RWPE1 (cell line): ENCODE measurements at regions of chr6 and their contacts with region 1.

Region 1: DNA sequence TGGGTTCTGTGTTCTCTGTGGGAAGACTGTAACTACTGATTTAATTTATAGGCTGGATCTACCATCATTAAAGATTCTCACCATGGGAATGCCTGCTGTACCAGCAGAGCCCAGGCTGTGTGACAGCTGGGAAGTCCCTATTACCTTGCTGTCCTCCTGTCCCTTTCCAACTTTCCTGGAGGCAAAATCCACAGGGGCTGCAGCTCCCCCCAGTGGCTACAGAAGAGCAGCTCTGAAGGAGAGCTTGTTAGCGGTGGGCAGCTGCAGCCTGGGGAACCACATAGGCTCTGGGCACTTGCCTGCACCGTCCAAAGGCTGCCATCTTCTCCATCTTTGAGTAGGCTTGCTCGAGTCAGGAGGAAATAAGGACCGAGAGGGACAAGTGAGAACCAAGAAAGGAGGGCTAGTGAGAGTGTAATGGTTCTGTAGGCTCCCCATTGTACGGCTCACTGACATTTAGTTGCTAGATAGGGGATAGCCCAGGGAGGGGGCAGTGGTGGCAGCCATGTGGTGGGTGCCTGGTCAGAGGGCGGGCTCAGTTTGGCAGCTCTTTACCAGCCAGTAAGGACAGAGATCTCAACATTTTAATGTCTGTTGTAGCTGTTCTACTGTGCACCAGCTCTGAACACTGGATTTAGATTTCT is 155.1 kb upstream of the MLIP start:
- DNase-seq: peak; percentile 70
- H3K27ac ChIP-seq: no peak overlapping the region
- CTCF ChIP-seq: peak; percentile 77

Region 2: DNA sequence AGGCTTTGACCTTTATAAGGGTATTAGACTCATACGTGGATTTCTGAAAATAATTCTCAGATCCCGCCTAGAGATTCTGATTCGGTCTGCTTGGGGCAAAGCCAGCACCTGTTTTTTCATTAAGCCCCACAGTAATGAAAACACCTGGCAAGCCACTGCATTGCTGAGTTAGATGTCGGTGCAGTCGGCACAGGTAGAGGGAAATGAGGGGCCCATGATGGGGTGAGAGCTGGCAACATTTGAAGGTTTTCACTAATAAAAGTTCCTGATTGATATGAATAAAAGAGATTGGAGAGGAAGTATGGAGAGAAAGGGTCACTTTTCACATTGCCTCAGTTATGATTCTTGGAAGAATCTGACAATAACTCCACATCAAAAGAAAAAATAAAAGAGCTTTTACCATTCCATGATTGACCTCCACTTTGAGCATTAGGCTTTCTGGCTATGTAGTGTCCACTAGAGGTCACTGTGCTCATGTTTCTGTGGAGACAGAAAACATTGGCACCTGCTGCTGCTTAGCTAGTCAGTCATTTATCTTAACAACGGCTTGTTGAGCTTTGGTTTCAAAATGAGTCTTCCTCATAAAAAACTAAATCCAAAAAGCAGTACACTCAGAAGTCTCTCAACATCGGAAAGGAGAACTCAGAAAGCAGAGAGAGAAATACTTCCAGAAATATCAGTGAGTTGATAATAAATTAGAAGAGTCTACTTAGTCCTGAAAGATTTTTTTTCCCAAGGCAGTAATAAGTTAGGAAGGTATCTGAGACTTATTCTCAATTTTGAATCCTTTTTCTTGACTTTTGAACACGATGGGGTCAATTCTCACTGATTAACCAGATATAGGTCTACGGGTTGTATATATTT is 237.4 kb before region 1 on chr6:
- CTCF ChIA-PET with region 1: interaction called, 98 read pairs
- POLR2A ChIA-PET with region 1: no interaction called
- DNase-seq: peak; percentile 59
- H3K27ac ChIP-seq: no peak overlapping the region
- CTCF ChIP-seq: peak; percentile 83

Region 3: DNA sequence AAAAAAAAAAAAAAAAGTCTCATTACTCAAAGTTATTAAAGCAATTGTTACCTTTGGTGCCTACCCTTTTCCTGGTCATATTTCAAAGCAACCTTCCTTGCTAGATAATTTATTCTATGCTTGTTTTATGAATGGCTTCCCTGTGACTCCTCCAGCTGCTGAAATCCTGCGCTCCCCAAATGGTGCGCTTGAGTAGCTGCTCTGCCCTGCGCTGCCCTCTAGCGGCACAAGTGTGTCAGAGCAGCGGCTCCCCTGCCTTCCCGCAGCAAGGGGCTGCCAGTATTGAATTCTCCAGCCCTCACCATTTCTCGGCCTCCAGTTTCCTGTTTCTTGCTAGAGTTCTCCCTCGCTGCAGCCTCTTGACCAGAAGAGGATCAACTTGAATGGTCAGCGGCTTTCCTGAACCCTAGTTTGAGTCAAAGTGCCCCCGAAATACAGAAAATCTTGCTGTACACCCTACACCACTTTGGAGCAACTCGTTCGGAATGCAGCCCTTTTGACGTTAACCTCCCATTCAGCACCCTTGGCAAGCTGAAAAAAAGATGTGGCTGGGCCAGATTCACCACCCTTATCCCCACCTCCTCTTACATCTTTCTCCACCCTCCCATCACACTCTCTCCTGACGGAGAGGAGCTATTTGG is 230.3 kb before region 1 on chr6:
- CTCF ChIA-PET with region 1: interaction called, 98 read pairs
- POLR2A ChIA-PET with region 1: no interaction called
- DNase-seq: peak; percentile 71
- H3K27ac ChIP-seq: no peak overlapping the region
- CTCF ChIP-seq: peak; percentile 94

Region 4: DNA sequence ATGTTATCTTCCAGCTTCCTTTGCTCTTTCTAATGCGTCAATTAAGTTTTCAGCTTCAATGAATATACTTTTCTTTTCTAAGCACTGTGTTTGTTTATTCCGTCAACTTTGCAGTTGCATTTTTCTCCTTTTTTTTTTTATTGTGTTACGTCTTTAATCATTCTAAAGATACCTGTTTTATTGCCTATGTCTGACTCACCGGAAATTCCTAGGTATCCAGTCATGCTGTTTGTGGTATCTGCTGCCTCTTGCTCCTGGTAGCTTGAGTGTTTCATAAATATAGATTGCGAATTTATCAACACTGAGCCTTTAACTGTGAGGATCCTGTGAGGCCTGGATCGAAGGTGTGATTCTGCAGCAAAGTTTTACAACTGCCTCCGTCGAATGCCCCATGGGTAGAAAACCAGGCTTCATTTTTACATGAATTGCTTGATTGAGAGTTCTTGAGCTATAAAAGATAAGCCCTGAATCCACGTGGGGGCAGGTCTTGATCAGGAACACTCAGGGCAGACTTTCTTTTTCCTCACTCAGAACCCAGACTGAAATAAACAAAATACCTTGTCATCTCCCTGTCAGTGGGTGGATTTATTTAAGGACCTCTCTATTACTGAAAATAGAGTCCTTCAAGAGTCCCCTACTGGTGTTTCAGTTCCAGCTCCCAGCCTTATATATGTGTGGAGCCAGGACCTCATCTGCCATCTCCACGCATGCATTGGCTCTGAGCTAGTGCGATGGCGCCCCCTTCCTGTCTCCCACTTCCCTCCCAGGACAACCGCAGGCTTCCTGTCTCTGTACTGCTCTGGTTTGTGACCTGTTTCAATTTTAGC is 221.5 kb before region 1 on chr6:
- CTCF ChIA-PET with region 1: interaction called, 15 read pairs
- POLR2A ChIA-PET with region 1: no interaction called
- DNase-seq: peak; percentile 88
- H3K27ac ChIP-seq: peak overlapping the region; percentile 92
- CTCF ChIP-seq: no peak

Region 5: DNA sequence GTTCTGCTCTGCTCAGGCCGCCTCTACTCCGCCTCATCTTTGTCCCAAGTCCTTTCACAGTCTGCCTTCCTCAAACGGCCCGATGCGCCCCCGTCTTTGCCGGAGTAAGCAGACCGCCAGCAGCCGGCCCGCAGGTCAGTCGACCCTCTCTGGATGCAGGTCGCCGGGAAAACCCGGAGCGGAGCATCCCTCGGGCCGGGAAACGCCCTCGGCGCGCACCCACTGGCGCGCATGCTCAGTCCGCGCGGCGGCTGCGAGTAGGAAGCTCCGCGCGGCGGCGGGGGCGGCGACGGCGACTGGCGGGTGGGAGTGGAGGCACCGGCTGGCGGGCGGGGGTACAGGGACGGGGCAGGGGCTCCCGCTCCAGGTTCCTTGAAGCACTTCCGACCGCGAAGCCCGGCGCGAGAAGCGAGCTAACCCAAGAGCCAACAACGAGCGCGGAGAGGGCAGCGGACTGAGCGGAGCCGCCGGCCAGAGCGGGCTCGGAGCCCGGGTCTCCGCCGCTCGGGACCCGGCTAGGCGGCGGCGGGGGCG is 161.4 kb before region 1 on chr6 and contains the start of gene LRRC1:
- CTCF ChIA-PET with region 1: interaction called, 23 read pairs
- POLR2A ChIA-PET with region 1: interaction called, 10 read pairs
- DNase-seq: peak; percentile 88
- H3K27ac ChIP-seq: peak within 1 kb of the TSS; percentile 86
- CTCF ChIP-seq: no peak

Region 6: DNA sequence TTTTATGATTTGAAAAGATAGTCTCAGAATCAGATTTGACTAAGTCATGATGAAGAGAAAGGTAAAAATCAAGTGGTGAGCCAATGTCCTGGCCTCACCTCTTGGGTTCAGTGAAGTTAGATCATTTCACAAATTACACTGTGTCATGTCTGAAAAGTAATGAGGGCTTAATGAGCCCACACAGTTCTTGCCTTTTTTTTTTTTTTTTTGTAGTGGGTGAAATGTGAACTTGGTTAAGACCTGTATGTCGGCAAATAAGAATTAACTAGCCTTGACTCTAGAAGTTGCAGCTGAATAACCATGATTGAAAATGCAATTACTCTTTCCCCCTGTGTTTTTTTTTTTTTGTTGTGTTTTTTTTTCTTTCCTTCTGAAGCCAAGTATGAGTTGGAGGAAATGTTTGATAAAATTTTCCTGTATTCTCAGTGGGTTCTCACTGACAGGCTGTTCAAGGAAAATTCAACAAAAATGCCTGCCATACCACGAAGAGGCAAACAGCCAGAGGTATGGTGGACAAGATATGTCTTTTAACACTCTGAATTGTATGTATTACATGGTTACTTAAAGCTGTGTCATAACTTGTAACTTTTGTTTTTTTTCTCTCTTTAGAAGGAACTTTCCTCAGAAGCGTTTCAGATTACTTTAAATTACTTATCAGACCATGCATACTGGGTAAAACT is 19.9 kb after region 1 on chr6:
- CTCF ChIA-PET with region 1: interaction called, 10 read pairs
- POLR2A ChIA-PET with region 1: no interaction called
- DNase-seq: no peak
- H3K27ac ChIP-seq: no peak overlapping the region
- CTCF ChIP-seq: no peak

Region 7: GRCh38 chr6:54204921-54205591 is 248.9 kb after region 1 on chr6:
- CTCF ChIA-PET with region 1: no interaction called
- POLR2A ChIA-PET with region 1: no interaction called
- DNase-seq: no peak
- H3K27ac ChIP-seq: no peak overlapping the region
- CTCF ChIP-seq: no peak